ENCODE measurements at regions of chr22 and their contacts with region 1.

Region 1: DNA sequence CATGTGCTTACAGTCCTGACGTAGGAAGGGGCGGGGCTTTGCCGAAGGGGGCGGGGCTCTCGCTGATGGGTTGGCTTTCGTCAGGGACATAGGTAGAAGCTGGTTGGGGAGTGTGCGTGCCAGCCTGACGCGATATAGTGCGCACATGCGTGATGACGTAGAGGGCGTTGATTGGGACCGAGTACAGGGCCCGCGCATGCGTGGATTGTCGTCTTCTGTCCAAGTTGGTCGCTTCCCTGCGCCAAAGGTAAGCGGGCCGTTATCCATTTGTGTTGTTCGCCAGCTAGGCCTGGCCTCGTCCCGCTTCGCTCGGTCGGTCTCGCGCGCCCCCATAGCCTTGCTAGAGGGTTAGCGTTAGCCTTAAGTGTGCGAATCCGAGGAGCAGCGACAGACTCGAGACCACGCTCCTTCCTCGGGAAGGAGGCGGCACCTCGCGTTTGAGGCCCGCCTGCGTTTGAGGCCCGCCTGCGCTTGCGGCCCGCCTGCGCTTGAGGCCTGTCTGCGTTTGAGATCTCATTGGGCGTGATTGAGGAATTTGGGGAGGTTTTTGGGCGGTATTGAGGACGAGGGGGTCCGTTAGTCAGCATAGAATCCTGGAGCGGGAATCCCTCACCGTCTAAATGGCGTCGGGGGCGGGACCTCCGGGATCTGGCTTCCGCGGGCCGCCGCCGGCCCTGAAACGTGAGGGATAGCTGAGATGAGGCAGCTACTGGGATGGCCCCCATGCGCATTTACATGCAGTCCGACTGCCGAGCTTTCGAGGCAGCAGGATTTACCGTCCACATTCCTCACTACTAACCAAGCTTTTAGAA is at the start of gene XRCC6:
- DNase-seq: peak; percentile 100
- H3K4me3 ChIP-seq: peak within 1 kb of the TSS; percentile 73 to 96 (median 84)
- H3K27ac ChIP-seq: peak within 1 kb of the TSS; percentile 91 to 98 (median 96)
- H3K4me1 ChIP-seq: peaks cover 17 to 47% (median 25%) of the 10 kb centered on the region in 4 donors
- H3K27me3 ChIP-seq: no peaks in the 10 kb centered on the region
- CTCF ChIP-seq: no peak
- EP300 ChIP-seq: no peak
- POLR2A ChIP-seq: peak; percentile 89
- total RNA-seq, gene XRCC6: 56.5 to 145 (median 126) TPM

Region 2: GRCh38 chr22:40808018-40808841 is 813.1 kb before region 1 on chr22:
- in situ Hi-C with region 1: no loop called
- intact Hi-C with region 1: no loop called
- DNase-seq: no peak
- H3K4me3 ChIP-seq: no peak overlapping the region
- H3K27ac ChIP-seq: no peak overlapping the region
- H3K4me1 ChIP-seq: no peaks in the 10 kb centered on the region
- H3K27me3 ChIP-seq: no peaks in the 10 kb centered on the region
- CTCF ChIP-seq: no peak
- EP300 ChIP-seq: no peak
- POLR2A ChIP-seq: no peak

Region 3: GRCh38 chr22:41397143-41397811 is 224.0 kb before region 1 on chr22:
- in situ Hi-C with region 1: no loop called
- intact Hi-C with region 1: loop called (anchors 5 kb)
- DNase-seq: peak; percentile 76
- H3K4me3 ChIP-seq: no peak overlapping the region
- H3K27ac ChIP-seq: peak overlapping the region; percentile 72 to 83 (median 76)
- H3K4me1 ChIP-seq: peaks cover 9 to 25% (median 21%) of the 10 kb centered on the region in 4 donors
- H3K27me3 ChIP-seq: no peaks in the 10 kb centered on the region
- CTCF ChIP-seq: no peak
- EP300 ChIP-seq: no peak
- POLR2A ChIP-seq: no peak

Region 4: DNA sequence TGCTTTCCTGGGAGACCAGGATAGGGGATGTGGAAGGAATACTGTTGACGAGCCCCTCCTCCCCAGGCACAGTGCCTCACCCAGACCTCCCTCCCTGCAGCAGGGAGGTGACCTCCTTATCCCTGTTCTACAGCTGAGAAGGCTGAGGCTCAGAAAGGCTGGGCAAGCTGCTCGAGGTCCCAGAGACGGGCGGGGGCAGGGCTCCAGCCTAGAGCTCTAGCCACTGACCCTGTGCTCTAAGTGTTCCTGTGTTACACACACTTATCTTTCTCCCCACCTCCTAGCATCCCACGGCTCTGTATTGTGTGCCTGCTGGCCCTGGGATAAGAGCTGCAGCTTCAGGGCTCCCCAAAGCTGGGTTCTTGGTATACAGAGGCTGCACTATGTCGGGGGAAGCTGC is 187.1 kb after region 1 on chr22:
- in situ Hi-C with region 1: no loop called
- intact Hi-C with region 1: no loop called
- DNase-seq: no peak
- H3K4me3 ChIP-seq: no peak overlapping the region
- H3K27ac ChIP-seq: no peak overlapping the region
- H3K4me1 ChIP-seq: no peaks in the 10 kb centered on the region
- H3K27me3 ChIP-seq: no peaks in the 10 kb centered on the region
- CTCF ChIP-seq: no peak
- EP300 ChIP-seq: no peak
- POLR2A ChIP-seq: no peak